WTC11 (cell line): ENCODE measurements at regions of chr11 and their contacts with region 1.

Region 1: DNA sequence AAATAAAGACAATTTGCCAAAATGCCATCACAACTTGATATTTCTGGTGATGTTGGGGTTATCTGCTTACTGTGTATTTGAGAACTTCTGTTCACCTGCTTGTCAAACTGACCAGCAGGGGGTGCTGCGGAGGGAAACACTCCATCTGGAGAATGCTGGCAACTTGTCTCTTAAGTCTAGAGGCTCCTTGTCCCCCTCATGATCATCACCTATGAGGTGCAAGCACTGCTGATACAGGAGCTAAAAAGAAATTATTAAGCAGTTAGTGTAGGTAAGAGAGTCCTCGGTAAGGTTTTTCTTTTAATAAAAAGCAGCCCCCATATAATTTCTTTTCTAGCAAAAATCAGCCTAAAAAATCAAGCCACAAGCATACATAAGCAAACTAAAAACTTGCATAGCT is 32.7 kb upstream of the GLYATL1B start:
- DNase-seq: peak; percentile 90
- ATAC-seq: peak; percentile 10; the same call in 1 of the 2 replicates
- H3K4me3 Mint-ChIP-seq: no peak overlapping the region
- H3K27ac Mint-ChIP-seq: no peak overlapping the region
- H3K4me1 Mint-ChIP-seq: peaks cover 74% of the 10 kb centered on the region
- H3K27me3 Mint-ChIP-seq: peaks cover 3% of the 10 kb centered on the region; the same call in 1 of the 2 replicates
- CTCF ChIP-seq: peak; percentile 73

Region 2: DNA sequence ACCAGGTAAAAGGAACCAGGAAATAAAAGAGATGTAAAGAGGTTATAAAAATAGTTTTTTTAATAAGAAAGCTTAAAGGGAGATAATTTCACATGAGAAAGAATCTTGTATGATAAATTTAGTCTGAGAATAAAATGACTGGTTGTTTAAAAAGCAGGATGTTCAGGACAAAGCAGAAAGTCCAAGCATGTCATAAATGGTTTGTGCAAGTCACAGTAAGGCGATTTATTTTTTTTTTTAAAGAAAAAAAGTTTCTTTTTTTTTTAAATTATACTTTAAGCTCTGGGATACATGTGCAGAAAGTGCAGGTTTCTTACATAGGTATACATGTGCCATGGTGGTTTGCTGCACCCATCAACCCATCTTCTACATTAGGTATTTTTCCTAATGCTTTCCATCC is 239.7 kb before region 1 on chr11:
- CTCF ChIA-PET with region 1: no interaction called
- POLR2A ChIA-PET with region 1: no interaction called
- DNase-seq: no peak
- ATAC-seq: no peak
- H3K4me3 Mint-ChIP-seq: no peak overlapping the region
- H3K27ac Mint-ChIP-seq: no peak overlapping the region
- H3K4me1 Mint-ChIP-seq: no peaks in the 10 kb centered on the region
- H3K27me3 Mint-ChIP-seq: peaks cover 10% of the 10 kb centered on the region
- CTCF ChIP-seq: no peak

Region 3: DNA sequence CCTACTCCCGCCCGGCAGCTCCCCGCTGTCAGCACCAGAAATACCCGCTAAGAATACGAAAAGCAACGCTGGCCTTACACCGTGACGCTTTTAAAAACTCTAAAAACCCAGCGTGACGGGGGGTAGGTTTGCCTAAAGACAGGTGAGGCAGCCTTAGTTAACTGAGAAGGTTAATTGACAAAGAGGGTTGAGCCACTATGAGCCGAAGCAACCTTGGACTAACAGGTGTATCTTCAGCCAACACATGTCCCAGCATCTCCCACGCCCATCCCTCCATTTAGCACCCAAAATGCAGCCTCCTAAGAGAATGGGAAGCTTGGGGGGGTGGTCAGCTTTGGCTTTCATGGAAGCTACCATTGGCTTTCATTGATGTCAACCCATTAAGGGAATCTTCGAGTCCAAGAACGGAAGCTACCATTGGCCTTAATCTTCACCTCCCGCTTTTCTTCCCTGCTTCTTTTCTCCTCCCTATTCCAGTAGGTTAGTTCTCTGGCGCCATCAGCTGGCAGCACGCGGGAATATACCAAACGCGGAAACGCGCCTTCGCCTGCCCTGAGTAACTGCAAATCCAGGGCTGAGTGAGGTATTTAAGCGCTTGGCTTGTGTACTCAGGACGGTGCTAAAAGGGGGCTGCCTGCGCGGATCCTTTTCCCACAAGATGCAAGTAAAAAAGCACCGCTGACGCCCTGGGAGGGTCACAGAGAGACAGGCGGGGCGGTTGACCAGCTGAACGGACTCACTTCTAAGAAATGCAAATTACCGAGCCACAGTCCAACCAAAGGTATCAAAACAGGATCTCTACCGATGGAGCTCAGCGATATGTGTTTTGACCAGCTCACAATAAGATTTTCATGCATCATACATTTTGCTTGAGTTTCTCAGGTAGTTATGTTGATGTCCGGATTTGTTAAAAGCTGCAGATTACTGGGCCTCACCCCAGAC is 152.6 kb before region 1 on chr11:
- CTCF ChIA-PET with region 1: interaction called, 161 read pairs
- POLR2A ChIA-PET with region 1: interaction called, 7 read pairs
- DNase-seq: peak; percentile 96
- ATAC-seq: peak; percentile 77
- H3K4me3 Mint-ChIP-seq: peak overlapping the region; percentile 62
- H3K27ac Mint-ChIP-seq: peak overlapping the region; percentile 42; the same call in 1 of the 2 replicates
- H3K4me1 Mint-ChIP-seq: peaks cover 45% of the 10 kb centered on the region
- H3K27me3 Mint-ChIP-seq: peaks cover 48% of the 10 kb centered on the region
- CTCF ChIP-seq: peak; percentile 59; the same call in 1 of the 2 replicates

Region 4: DNA sequence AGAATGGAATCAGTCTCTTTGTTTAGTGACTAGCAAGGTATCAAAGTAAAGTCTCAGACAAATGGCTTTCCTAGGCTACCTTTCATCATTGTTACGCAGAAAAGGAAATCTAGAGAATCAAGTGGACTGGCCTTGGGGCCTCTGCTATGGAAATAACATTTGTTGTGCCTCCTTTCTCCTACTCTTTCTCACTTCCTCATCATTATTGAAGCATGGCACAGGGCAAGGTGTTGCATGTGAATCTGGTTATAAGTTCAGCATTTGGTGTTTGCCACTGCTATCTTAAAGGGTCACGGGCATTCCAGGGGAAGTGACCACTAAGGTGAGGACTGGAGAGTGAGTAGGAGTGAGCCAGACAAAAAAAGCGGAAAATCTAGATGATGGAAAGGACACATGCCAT is 59.2 kb before region 1 on chr11:
- CTCF ChIA-PET with region 1: interaction called, 18 read pairs
- POLR2A ChIA-PET with region 1: no interaction called
- DNase-seq: no peak
- ATAC-seq: no peak
- H3K4me3 Mint-ChIP-seq: no peak overlapping the region
- H3K27ac Mint-ChIP-seq: no peak overlapping the region
- H3K4me1 Mint-ChIP-seq: peaks cover 17% of the 10 kb centered on the region
- H3K27me3 Mint-ChIP-seq: peaks cover 1% of the 10 kb centered on the region; the same call in 1 of the 2 replicates
- CTCF ChIP-seq: no peak

Region 5: DNA sequence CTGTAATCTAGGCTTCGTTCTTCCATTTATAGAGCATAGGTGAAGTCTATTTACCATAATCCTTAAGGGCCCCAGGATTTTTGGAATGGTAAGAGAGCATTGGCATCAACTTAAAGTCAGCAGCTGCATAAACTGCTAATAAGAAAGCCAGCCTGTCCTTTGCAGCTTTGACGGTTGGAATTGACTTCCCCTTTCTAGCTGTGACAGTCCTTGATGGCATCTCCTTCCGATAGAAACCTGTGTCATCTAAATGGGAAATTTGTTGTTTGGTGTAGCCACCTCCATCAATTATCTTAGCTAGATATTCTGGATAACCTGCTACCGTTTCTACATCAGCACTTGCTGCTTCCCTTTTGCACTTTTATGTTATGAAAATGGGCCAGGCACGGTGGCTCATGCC is 25.3 kb before region 1 on chr11:
- CTCF ChIA-PET with region 1: interaction called, 10 read pairs
- POLR2A ChIA-PET with region 1: no interaction called
- DNase-seq: no peak
- ATAC-seq: no peak
- H3K4me3 Mint-ChIP-seq: no peak overlapping the region
- H3K27ac Mint-ChIP-seq: no peak overlapping the region
- H3K4me1 Mint-ChIP-seq: peaks cover 15% of the 10 kb centered on the region
- H3K27me3 Mint-ChIP-seq: no peaks in the 10 kb centered on the region
- CTCF ChIP-seq: no peak

Region 6: GRCh38 chr11:59097113-59097708 is 43.8 kb after region 1 on chr11:
- CTCF ChIA-PET with region 1: interaction called, 93 read pairs
- POLR2A ChIA-PET with region 1: no interaction called
- DNase-seq: peak; percentile 63
- ATAC-seq: peak; percentile 17; the same call in 1 of the 2 replicates
- H3K4me3 Mint-ChIP-seq: no peak overlapping the region
- H3K27ac Mint-ChIP-seq: no peak overlapping the region
- H3K4me1 Mint-ChIP-seq: peaks cover 84% of the 10 kb centered on the region
- H3K27me3 Mint-ChIP-seq: no peaks in the 10 kb centered on the region
- CTCF ChIP-seq: peak; percentile 28; the same call in 1 of the 2 replicates

Region 7: DNA sequence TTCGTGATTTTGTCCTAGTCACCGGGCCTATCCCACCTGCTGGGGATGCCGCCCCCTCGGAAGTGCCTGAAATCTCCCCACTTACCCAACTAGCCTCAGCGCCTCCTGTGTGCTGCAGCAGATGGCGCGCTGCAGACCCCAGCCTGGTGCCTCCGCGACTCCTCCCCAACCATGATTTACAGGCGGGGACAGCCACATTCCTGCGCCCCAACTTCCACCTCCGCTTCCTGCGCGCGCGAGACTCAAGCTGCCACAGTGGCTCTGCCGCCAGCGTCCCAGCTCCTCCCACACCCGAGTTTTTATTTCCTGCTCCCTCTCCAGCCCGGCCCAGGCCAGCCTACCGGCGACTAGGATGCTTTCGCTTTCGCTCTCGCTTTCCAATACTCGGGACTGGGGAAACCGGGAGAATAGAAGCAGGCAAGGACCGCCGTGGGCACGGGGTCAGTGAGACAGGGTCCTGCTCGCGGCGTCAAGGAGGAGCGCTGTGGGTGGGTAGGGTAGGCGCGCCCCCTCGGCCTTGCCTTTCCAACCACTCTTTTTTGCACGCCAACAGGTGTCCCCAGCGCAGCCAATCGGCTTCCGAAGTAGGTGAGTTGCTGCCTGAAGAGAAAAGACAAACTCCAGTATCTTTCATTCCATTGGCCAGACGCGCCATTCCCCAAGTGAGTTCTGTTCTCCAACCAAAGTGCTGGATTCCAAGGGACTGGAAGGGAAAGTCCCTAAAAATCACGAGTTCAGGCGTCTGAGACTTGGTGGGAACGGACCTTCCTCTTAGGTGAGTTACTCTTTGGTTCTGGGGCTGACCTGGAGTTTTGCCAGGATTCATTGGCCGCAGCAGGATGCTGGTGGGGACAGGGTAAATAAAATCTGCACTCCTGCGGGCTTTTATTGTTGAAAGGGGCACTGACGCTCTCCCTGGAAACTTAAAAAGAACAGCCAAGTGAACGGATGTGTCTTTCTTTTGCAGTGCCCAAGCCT is 89.4 kb after region 1 on chr11 and contains the start of gene FAM111A:
- CTCF ChIA-PET with region 1: interaction called, 30 read pairs
- POLR2A ChIA-PET with region 1: no interaction called
- DNase-seq: peak; percentile 81
- ATAC-seq: peak; percentile 80
- H3K4me3 Mint-ChIP-seq: peak within 1 kb of the TSS; percentile 86
- H3K27ac Mint-ChIP-seq: peak within 1 kb of the TSS; percentile 96
- H3K4me1 Mint-ChIP-seq: peaks cover 42% of the 10 kb centered on the region
- H3K27me3 Mint-ChIP-seq: peaks cover 13% of the 10 kb centered on the region
- CTCF ChIP-seq: no peak
- total RNA-seq, gene FAM111A: 18.8 to 24.4 TPM (median 22.0 TPM) in 3 replicates

Region 8: DNA sequence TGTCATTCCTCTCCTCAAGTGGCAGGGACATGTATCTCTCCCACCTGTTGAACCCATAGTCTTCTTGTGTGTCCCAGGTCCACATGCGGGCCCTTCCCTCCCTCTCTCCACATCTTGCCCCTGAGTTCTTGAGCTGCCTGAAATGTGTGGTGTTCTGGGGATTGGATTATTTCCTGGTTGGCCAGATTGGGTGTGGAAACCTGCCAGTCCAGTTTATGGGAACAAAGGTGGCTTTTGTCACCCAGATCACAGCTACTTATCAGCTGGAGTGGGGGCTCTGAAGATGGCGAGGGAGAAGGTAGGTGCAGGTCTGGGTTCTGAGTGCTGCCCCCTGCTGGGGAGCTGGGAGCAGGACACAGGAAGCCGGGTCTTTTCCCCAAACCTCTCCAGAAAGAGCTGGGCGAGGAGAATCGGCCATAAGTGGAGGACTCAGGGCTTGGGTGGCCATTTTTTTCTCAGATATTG is 132.8 kb after region 1 on chr11:
- CTCF ChIA-PET with region 1: interaction called, 11 read pairs
- POLR2A ChIA-PET with region 1: no interaction called
- DNase-seq: peak; percentile 68
- ATAC-seq: peak; percentile 78
- H3K4me3 Mint-ChIP-seq: no peak overlapping the region
- H3K27ac Mint-ChIP-seq: no peak overlapping the region
- H3K4me1 Mint-ChIP-seq: peaks cover 16% of the 10 kb centered on the region
- H3K27me3 Mint-ChIP-seq: no peaks in the 10 kb centered on the region
- CTCF ChIP-seq: peak; percentile 65